A673 (cell line): ENCODE measurements at regions of chr4 and their contacts with region 1.

Region 1: GRCh38 chr4:5399790-5400421 is 308.5 kb downstream of the EVC2 start:
- DNase-seq: peak; percentile 60
- H3K4me3 ChIP-seq: no peak overlapping the region
- H3K27ac ChIP-seq: no peak overlapping the region
- H3K4me1 ChIP-seq: no peaks in the 10 kb centered on the region
- H3K27me3 ChIP-seq: no peaks in the 10 kb centered on the region
- CTCF ChIP-seq: peak; percentile 81

Region 2: DNA sequence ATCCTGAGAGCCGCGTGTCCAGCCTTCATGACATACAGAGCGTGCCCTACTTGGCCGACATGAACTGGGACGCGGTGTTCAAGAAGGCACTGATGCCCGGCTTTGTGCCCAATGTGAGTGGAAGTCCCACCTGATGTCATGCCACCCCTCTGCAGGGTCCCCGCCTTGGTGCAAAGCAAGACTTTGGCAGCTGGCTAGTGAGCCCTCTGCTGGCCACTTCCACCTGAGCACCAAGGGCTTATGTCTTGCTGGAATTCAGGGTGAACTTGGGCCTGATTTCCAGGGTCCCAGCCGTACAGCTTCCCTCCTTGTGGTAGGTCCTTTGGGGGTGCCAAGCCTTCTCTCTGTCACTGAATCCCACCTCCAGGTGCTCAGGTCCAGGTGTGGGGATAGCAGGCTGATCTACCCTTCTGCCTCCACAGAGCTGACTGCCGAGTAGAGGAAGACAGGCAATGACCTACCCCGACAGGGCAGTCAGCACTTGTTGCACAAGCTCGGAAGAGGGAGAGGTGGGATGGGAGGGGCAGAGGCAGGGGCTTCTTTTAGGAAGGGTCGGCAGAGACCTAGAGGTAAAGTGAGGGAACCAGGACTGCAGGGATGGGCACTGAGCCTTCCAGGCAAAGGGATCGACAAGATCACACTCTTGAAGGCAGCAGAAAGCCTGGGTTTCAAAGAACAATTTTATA is 60.4 kb after region 1 on chr4:
- CTCF ChIA-PET with region 1: no interaction called
- POLR2A ChIA-PET with region 1: no interaction called
- intact Hi-C with region 1: no loop called
- DNase-seq: peak; percentile 52
- H3K4me3 ChIP-seq: no peak overlapping the region
- H3K27ac ChIP-seq: no peak overlapping the region
- H3K4me1 ChIP-seq: no peaks in the 10 kb centered on the region
- H3K27me3 ChIP-seq: no peaks in the 10 kb centered on the region
- CTCF ChIP-seq: peak; percentile 77

Region 3: DNA sequence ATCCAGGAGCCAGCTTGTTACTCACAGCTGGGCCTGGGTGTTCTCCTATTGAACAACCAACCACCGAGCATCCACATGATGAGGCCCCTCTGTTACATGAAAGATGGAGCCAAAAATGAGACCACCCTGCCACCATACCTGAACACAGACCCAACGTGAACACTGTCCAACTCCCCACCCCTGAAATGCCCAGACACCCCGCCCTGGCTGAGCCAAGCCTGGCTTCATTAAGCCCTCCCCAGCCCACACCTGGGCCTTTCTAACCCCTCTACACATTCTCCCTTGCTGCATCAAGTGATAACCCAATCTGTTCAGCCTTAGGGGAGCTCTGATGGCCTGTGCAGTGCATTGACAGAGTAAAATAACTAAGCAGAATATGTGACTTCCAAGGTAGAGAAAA is 391.7 kb after region 1 on chr4:
- CTCF ChIA-PET with region 1: interaction called, 3 read pairs
- POLR2A ChIA-PET with region 1: no interaction called
- intact Hi-C with region 1: loop called (anchors 5 kb)
- DNase-seq: no peak
- H3K4me3 ChIP-seq: no peak overlapping the region
- H3K27ac ChIP-seq: no peak overlapping the region
- H3K4me1 ChIP-seq: no peaks in the 10 kb centered on the region
- H3K27me3 ChIP-seq: no peaks in the 10 kb centered on the region
- CTCF ChIP-seq: no peak